GM10248 (cell line): ENCODE measurements at regions of chr22 and their contacts with region 1.

Region 1: DNA sequence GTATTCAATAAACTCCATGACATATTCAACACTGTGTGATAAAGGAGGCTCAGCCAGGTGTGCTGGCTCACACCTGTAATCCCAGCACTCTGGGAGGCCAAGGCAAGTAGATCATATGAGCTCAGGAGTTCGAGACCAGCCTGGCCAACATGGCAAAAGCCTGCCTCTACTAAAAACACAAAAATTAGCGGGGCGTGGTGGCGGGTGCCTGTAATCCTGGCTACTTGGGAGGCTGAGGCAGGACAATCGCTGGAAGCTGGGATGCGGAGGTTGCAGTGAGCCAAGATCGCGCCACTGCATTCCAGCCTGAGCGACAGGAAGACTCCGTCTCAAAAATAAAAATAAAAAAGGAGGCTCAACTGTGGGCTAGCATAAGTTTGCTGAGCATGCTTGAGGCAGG is 4.1 kb upstream of the SLC25A18 start:
- DNase-seq: no peak
- CTCF ChIP-seq: no peak

Region 2: GRCh38 chr22:17569971-17570511 is 10.9 kb after region 1 on chr22:
- CTCF ChIA-PET with region 1: interaction called, 10 read pairs
- POLR2A ChIA-PET with region 1: no interaction called
- DNase-seq: no peak
- CTCF ChIP-seq: no peak